CD8-positive, alpha-beta T cell (primary cell): ENCODE measurements at regions of chr14 and their contacts with region 1.

Region 1: GRCh38 chr14:73568381-73568781 is 632 bp upstream of the ACOT2 start:
- DNase-seq: peak in 4 of 9 experiments; percentile 3 to 47 (median 30)
- ATAC-seq: no peak
- H3K4me3 ChIP-seq: peak overlapping the region; percentile 74 to 84
- H3K4me3 Mint-ChIP-seq: peak overlapping the region; percentile 89
- H3K27ac ChIP-seq: peak overlapping the region; percentile 78 to 80
- H3K27ac Mint-ChIP-seq: peak overlapping the region; percentile 94
- H3K4me1 ChIP-seq: peaks cover 30% of the 10 kb centered on the region
- H3K4me1 Mint-ChIP-seq: peaks cover 47% of the 10 kb centered on the region
- H3K27me3 ChIP-seq: no peaks in the 10 kb centered on the region
- H3K27me3 Mint-ChIP-seq: no peaks in the 10 kb centered on the region
- CTCF ChIP-seq: no peak

Region 2: DNA sequence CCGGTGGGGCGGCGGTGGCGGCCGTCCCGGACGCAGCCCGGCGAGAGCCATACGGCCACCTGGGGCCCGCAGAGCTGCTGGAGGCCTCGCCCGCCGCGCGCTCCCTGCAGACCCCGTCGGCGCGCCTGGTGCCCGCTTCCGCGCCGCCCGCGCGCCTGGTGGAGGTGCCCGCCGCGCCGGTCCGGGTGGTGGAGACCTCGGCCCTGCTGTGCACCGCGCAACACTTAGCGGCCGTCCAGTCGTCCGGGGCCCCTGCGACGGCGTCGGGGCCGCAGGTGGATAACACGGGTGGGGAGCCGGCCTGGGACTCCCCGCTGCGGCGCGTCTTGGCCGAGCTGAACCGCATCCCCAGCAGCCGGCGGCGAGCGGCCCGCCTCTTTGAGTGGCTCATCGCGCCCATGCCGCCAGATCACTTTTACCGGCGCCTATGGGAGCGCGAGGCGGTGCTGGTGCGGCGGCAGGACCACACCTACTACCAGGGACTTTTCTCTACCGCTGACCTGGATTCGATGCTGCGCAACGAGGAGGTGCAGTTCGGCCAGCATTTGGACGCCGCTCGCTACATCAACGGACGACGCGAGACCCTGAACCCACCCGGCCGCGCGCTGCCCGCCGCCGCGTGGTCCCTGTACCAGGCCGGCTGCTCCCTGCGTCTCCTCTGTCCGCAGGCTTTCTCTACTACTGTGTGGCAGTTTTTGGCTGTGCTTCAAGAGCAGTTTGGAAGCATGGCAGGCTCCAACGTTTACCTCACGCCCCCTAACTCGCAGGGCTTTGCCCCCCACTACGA is 76.9 kb before region 1 on chr14:
- CTCF ChIA-PET with region 1: no interaction called
- POLR2A ChIA-PET with region 1: interaction called, 23 read pairs
- intact Hi-C with region 1: loop called in 1 of 2 experiments (anchors 5 kb)
- DNase-seq: peak in 8 of 9 experiments; percentile 31 to 86 (median 68)
- ATAC-seq: peak; percentile 72
- H3K4me3 ChIP-seq: peak overlapping the region; percentile 63 to 68
- H3K4me3 Mint-ChIP-seq: peak overlapping the region; percentile 86
- H3K27ac ChIP-seq: peak overlapping the region; percentile 66 to 78
- H3K27ac Mint-ChIP-seq: peak overlapping the region; percentile 91
- H3K4me1 ChIP-seq: peaks cover 37% of the 10 kb centered on the region
- H3K4me1 Mint-ChIP-seq: peaks cover 50% of the 10 kb centered on the region
- H3K27me3 ChIP-seq: no peaks in the 10 kb centered on the region
- H3K27me3 Mint-ChIP-seq: no peaks in the 10 kb centered on the region
- CTCF ChIP-seq: no peak

Region 3: GRCh38 chr14:73526569-73526968 is 41.8 kb before region 1 on chr14:
- CTCF ChIA-PET with region 1: interaction called, 4 read pairs
- POLR2A ChIA-PET with region 1: no interaction called
- intact Hi-C with region 1: loop called in 1 of 2 experiments (anchors 5 kb)
- DNase-seq: no peak
- ATAC-seq: no peak
- H3K4me3 ChIP-seq: no peak overlapping the region
- H3K4me3 Mint-ChIP-seq: no peak overlapping the region
- H3K27ac ChIP-seq: no peak overlapping the region
- H3K27ac Mint-ChIP-seq: no peak overlapping the region
- H3K4me1 ChIP-seq: no peaks in the 10 kb centered on the region
- H3K4me1 Mint-ChIP-seq: no peaks in the 10 kb centered on the region
- H3K27me3 ChIP-seq: no peaks in the 10 kb centered on the region
- H3K27me3 Mint-ChIP-seq: no peaks in the 10 kb centered on the region
- CTCF ChIP-seq: no peak

Region 4: GRCh38 chr14:73613046-73613383 is 44.6 kb after region 1 on chr14:
- CTCF ChIA-PET with region 1: interaction called, 9 read pairs
- POLR2A ChIA-PET with region 1: interaction called, 29 read pairs
- intact Hi-C with region 1: loop called (anchors 1 to 2 kb)
- DNase-seq: no peak
- ATAC-seq: no peak
- H3K4me3 ChIP-seq: peak overlapping the region; percentile 58 to 94
- H3K4me3 Mint-ChIP-seq: peak overlapping the region; percentile 86
- H3K27ac ChIP-seq: peak overlapping the region; percentile 37 to 77
- H3K27ac Mint-ChIP-seq: peak overlapping the region; percentile 82
- H3K4me1 ChIP-seq: peaks cover 3% of the 10 kb centered on the region
- H3K4me1 Mint-ChIP-seq: peaks cover 5% of the 10 kb centered on the region
- H3K27me3 ChIP-seq: no peaks in the 10 kb centered on the region
- H3K27me3 Mint-ChIP-seq: peaks cover 3% of the 10 kb centered on the region
- CTCF ChIP-seq: no peak

Region 5: DNA sequence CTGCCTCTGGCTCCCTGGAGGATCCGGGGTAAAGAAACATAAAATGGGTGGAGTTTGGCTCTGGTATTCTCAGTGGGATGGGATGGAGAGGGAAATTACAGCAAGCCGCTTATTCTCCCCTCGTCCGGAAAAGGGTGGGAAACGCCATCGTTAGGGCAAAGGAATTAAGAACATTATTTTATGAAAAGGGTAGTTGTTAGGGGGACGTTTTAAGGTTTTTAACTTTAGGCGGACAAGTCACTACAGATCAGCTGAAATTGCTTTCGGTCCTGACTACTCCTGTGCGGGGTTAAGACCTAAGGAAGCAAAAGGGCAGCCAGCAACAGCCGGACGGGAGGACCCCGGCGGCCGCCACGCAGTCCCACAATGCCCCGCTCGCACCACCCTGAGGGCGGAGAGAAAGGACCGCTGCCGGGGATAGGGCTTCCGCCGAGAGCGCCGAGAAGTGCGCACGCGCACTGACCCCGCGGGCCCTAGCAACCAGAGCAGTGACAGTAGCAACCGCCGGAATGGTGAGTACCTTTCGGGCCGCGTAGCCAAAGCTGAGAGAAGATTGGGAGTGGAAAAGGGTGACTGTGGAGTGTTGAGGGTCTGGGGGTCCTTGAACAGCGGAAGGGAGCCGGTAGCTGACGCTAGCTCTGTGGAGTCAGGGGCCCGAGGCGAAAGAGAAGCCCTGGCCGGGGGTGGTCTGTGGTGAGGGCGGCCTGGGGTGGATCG is 76.3 kb after region 1 on chr14 and contains the start of gene DNAL1:
- CTCF ChIA-PET with region 1: interaction called, 3 read pairs
- POLR2A ChIA-PET with region 1: interaction called, 5 read pairs
- intact Hi-C with region 1: loop called in 1 of 2 experiments (anchors 2 kb)
- DNase-seq: peak; percentile 83 to 94 (median 90)
- ATAC-seq: peak; percentile 97
- H3K4me3 ChIP-seq: peak within 1 kb of the TSS; percentile 67 to 72
- H3K4me3 Mint-ChIP-seq: peak within 1 kb of the TSS; percentile 89
- H3K27ac ChIP-seq: peak within 1 kb of the TSS; percentile 61 to 76
- H3K27ac Mint-ChIP-seq: peak within 1 kb of the TSS; percentile 85
- H3K4me1 ChIP-seq: peaks cover 15% of the 10 kb centered on the region
- H3K4me1 Mint-ChIP-seq: peaks cover 17% of the 10 kb centered on the region
- H3K27me3 ChIP-seq: no peaks in the 10 kb centered on the region
- H3K27me3 Mint-ChIP-seq: no peaks in the 10 kb centered on the region
- CTCF ChIP-seq: no peak
- total RNA-seq, gene DNAL1: 2.8 to 3.3 TPM